H1 (cell line): ENCODE measurements at regions of chr20 and their contacts with region 1.

Region 1: DNA sequence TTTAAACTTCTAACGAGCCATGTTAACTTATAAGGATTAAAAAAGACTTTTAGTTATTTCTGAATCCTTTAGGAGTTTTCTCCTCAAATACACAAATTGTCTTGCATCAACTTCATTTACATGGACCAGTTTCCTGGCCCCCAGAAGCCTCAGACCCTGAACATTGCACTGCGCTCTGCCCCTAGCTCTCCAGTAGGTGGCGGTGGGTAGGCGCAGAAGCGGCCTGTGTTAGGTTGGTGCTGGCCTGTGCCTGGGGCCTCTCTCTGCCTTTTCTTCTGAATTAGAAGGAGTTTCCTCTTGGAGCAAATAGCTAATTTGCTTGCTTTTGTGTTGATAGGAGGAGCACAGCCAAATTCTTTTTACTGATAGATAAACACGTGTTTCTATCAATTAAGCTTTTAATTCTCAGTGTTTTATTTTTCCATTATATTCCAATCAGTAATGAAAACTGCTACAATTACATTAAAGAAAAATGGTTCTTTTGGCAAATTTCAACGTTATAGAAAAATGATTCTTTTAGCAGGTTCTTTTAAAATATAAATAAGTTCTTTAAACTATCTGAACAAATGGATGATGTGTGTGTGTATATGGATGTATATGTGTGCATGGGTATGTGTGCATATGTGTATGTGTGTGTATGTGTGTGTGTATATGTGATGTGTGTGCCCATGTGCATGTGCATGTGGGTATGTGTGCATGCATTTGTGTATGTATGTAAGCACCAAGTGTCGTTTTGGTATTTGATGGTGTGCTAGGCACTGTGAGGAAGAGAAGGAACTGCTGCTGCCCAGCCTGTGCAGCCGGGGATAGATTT is 44.5 kb downstream of the DTD1 start:
- DNase-seq: peak; percentile 50 to 80
- H3K4me3 ChIP-seq: no peak overlapping the region
- H3K27ac ChIP-seq: no peak overlapping the region
- H3K4me1 ChIP-seq: no peaks in the 10 kb centered on the region; a peak in 1 of 7 replicates
- H3K27me3 ChIP-seq: no peaks in the 10 kb centered on the region
- CTCF ChIP-seq: peak; percentile 95 to 99 (median 97)
- EP300 ChIP-seq: peak in 1 of 2 experiments; percentile 22; a peak in 1 of 3 replicates
- POLR2A ChIP-seq: no peak
- RAD21 ChIP-seq: peak; percentile 99

Region 2: DNA sequence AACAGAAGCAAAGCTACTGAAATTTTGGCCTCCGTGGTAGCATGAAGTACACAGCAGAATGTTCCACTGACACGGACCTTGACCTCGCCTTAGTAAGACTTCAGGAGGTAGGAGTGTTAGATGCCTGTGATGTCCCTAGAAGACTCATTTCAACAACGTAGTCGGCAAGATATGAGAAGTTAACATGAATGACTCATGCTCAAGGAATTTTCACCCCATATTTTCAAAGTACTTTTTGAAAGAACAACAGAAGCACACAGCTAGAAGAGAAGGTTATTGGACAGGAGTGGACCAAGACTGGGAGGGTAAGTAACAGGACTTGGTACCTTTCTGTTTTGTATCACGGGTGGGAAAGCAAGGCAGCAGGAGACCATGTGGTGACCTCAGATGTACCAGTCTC is 243.5 kb before region 1 on chr20:
- CTCF ChIA-PET with region 1: no interaction called
- POLR2A ChIA-PET with region 1: no interaction called
- DNase-seq: no peak
- H3K4me3 ChIP-seq: no peak overlapping the region
- H3K27ac ChIP-seq: no peak overlapping the region
- H3K4me1 ChIP-seq: no peaks in the 10 kb centered on the region
- H3K27me3 ChIP-seq: no peaks in the 10 kb centered on the region
- CTCF ChIP-seq: no peak
- EP300 ChIP-seq: no peak
- POLR2A ChIP-seq: no peak
- RAD21 ChIP-seq: no peak

Region 3: GRCh38 chr20:18650224-18650623 is 17.8 kb after region 1 on chr20:
- CTCF ChIA-PET with region 1: interaction called, 18 read pairs
- POLR2A ChIA-PET with region 1: interaction called, 3 read pairs
- DNase-seq: no peak
- H3K4me3 ChIP-seq: no peak overlapping the region
- H3K27ac ChIP-seq: no peak overlapping the region
- H3K4me1 ChIP-seq: peaks cover 0 to 5% (median under 1%) of the 10 kb centered on the region in 4 experiments; a peak in 3 of 7 replicates
- H3K27me3 ChIP-seq: no peaks in the 10 kb centered on the region
- CTCF ChIP-seq: no peak
- EP300 ChIP-seq: no peak
- POLR2A ChIP-seq: no peak
- RAD21 ChIP-seq: no peak

Region 4: DNA sequence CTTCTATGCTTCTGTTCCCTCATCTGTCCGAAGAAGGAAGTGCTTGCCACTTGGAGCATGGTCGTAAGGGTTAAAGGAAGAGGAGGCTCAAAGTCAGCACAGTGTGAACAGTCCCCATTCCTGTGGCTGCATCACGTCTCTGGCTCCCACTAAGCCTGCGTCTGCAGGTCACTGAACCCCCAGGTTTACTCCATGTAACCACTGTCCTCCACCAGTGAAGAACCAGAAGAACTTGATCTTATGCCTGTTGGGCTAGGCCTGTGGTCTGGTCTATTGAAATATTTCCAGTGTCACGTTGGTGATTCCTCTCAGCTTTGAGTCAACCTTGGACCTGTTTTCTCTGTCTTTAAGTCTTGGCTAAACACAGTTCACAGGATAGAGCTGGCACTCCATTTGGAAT is 135.3 kb after region 1 on chr20:
- CTCF ChIA-PET with region 1: interaction called, 10 read pairs
- POLR2A ChIA-PET with region 1: no interaction called
- DNase-seq: no peak
- H3K4me3 ChIP-seq: no peak overlapping the region
- H3K27ac ChIP-seq: no peak overlapping the region
- H3K4me1 ChIP-seq: no peaks in the 10 kb centered on the region
- H3K27me3 ChIP-seq: no peaks in the 10 kb centered on the region
- CTCF ChIP-seq: no peak
- EP300 ChIP-seq: no peak
- POLR2A ChIP-seq: no peak
- RAD21 ChIP-seq: no peak

Region 5: DNA sequence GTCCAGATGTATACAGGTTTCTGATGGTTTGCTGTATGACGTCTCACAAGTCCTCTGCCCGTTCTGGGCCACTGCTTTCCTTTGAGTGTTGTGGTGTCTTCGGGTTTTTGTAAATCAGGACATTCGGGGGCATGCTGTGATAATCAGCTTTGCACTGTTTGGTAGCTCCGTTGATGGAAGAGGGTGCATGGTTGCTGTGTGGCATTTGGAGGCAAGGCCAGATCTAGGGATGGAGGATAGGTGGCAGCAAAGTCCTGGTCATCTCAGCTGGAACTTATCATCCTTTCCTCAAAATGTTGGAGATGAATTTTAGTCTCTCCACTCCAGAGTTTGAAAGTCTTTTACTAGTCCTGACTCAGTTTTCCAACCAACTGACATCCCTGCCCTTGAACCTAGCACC is 272.2 kb after region 1 on chr20:
- CTCF ChIA-PET with region 1: interaction called, 37 read pairs
- POLR2A ChIA-PET with region 1: no interaction called
- DNase-seq: no peak
- H3K4me3 ChIP-seq: no peak overlapping the region
- H3K27ac ChIP-seq: no peak overlapping the region
- H3K4me1 ChIP-seq: peaks cover 0 to 2% (median under 1%) of the 10 kb centered on the region in 4 experiments; a peak in 3 of 7 replicates
- H3K27me3 ChIP-seq: no peaks in the 10 kb centered on the region
- CTCF ChIP-seq: peak; percentile 37 to 70 (median 55)
- EP300 ChIP-seq: no peak
- POLR2A ChIP-seq: no peak
- RAD21 ChIP-seq: peak; percentile 70 to 74